H1 (cell line): ENCODE measurements at regions of chr12 and their contacts with region 1.

Region 1: GRCh38 chr12:117836999-117837736 is 131.6 kb downstream of the KSR2 start:
- DNase-seq: peak; percentile 70 to 96
- H3K4me3 ChIP-seq: peak overlapping the region in 1 of 4 experiments; percentile 39; a peak in 1 of 8 replicates
- H3K27ac ChIP-seq: no peak overlapping the region
- H3K4me1 ChIP-seq: peaks cover 0 to 5% (median 2%) of the 10 kb centered on the region in 4 experiments; a peak in 4 of 7 replicates
- H3K27me3 ChIP-seq: no peaks in the 10 kb centered on the region
- CTCF ChIP-seq: peak; percentile 95 to 100 (median 99)
- EP300 ChIP-seq: no peak
- POLR2A ChIP-seq: no peak
- RAD21 ChIP-seq: peak; percentile 97 to 98

Region 2: DNA sequence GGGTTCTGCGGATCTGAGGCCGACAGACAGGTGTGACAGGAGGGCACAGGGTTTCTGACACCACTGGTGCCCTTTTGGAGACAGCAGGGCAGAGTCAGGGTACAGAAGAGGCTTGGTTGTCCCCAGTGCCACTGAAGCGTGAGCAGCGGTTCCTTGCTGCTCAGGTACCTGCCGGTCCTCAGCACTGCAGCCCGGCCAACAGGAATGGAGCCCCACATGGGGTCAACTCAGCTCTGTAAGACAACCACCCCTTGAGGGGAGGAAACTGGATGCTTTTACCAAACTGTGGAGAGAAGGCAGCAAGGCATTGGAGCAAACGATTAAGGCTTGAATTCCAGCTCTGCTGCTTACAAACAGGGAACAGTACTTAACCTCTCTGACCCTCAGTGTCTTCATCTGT is 229.4 kb before region 1 on chr12:
- CTCF ChIA-PET with region 1: interaction called, 16 read pairs
- POLR2A ChIA-PET with region 1: no interaction called
- DNase-seq: no peak
- H3K4me3 ChIP-seq: no peak overlapping the region
- H3K27ac ChIP-seq: no peak overlapping the region
- H3K4me1 ChIP-seq: no peaks in the 10 kb centered on the region; a peak in 4 of 7 replicates
- H3K27me3 ChIP-seq: no peaks in the 10 kb centered on the region
- CTCF ChIP-seq: no peak
- EP300 ChIP-seq: no peak
- POLR2A ChIP-seq: no peak
- RAD21 ChIP-seq: no peak

Region 3: GRCh38 chr12:117671734-117672133 is 165.4 kb before region 1 on chr12:
- CTCF ChIA-PET with region 1: interaction called, 25 read pairs
- POLR2A ChIA-PET with region 1: interaction called, 5 read pairs
- DNase-seq: peak; percentile 75 to 87
- H3K4me3 ChIP-seq: no peak overlapping the region
- H3K27ac ChIP-seq: no peak overlapping the region
- H3K4me1 ChIP-seq: peaks cover 0 to 4% (median 2%) of the 10 kb centered on the region in 4 experiments; a peak in 3 of 7 replicates
- H3K27me3 ChIP-seq: no peaks in the 10 kb centered on the region
- CTCF ChIP-seq: peak; percentile 84 to 93 (median 86)
- EP300 ChIP-seq: no peak
- POLR2A ChIP-seq: no peak
- RAD21 ChIP-seq: peak; percentile 88 to 95

Region 4: DNA sequence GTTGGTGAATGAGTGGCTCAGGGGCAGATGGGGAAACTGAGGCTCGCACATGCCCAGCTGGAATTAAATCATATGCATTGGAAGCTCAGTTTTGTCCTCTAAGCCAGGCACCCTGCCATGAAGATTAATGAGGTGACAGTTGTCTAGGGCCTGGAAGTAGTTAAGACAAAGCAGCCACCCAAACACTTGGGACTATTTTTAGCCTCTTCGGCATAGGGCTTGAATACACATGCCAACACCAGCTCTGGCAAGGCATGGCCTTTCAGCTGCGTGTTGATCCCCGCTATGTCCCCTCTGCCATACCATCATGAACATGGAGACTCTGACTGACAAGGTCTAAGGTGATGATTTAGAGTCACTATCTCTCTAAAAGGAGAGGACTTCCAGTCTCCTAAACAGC is 118.6 kb before region 1 on chr12:
- CTCF ChIA-PET with region 1: interaction called, 12 read pairs
- POLR2A ChIA-PET with region 1: no interaction called
- DNase-seq: no peak
- H3K4me3 ChIP-seq: no peak overlapping the region
- H3K27ac ChIP-seq: no peak overlapping the region
- H3K4me1 ChIP-seq: no peaks in the 10 kb centered on the region; a peak in 1 of 7 replicates
- H3K27me3 ChIP-seq: no peaks in the 10 kb centered on the region
- CTCF ChIP-seq: no peak
- EP300 ChIP-seq: no peak
- POLR2A ChIP-seq: no peak
- RAD21 ChIP-seq: no peak

Region 5: DNA sequence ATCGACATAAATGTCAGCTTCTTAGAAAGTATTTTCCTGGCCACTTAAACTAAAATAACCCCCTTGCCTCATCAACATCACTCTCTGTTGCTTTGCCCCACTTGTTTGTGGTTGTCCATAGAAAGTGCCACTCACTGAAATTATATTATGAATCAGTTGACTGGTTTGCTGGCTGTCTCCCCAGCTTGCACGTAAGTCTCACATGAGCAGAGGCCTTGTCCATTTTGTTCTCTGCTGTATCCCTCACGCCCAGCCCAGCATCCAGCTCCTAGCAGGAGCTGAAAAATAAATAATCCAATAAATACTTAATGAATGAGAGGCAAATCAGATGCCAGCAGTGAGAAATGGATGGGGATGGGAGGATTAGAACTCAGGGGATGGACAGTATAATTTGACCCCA is 27.7 kb before region 1 on chr12:
- CTCF ChIA-PET with region 1: interaction called, 10 read pairs
- POLR2A ChIA-PET with region 1: no interaction called
- DNase-seq: no peak
- H3K4me3 ChIP-seq: no peak overlapping the region
- H3K27ac ChIP-seq: no peak overlapping the region
- H3K4me1 ChIP-seq: no peaks in the 10 kb centered on the region
- H3K27me3 ChIP-seq: no peaks in the 10 kb centered on the region
- CTCF ChIP-seq: no peak
- EP300 ChIP-seq: no peak
- POLR2A ChIP-seq: no peak
- RAD21 ChIP-seq: no peak

Region 6: GRCh38 chr12:117825827-117826226 is 11.3 kb before region 1 on chr12:
- CTCF ChIA-PET with region 1: interaction called, 17 read pairs
- POLR2A ChIA-PET with region 1: no interaction called
- DNase-seq: no peak
- H3K4me3 ChIP-seq: no peak overlapping the region
- H3K27ac ChIP-seq: no peak overlapping the region
- H3K4me1 ChIP-seq: no peaks in the 10 kb centered on the region
- H3K27me3 ChIP-seq: no peaks in the 10 kb centered on the region
- CTCF ChIP-seq: no peak
- EP300 ChIP-seq: no peak
- POLR2A ChIP-seq: no peak
- RAD21 ChIP-seq: no peak

Region 7: GRCh38 chr12:117857632-117858612 is 20.8 kb after region 1 on chr12:
- CTCF ChIA-PET with region 1: interaction called, 31 read pairs
- POLR2A ChIA-PET with region 1: no interaction called
- DNase-seq: peak; percentile 49 to 87
- H3K4me3 ChIP-seq: no peak overlapping the region
- H3K27ac ChIP-seq: no peak overlapping the region
- H3K4me1 ChIP-seq: no peaks in the 10 kb centered on the region
- H3K27me3 ChIP-seq: no peaks in the 10 kb centered on the region
- CTCF ChIP-seq: peak; percentile 51 to 86 (median 52)
- EP300 ChIP-seq: no peak
- POLR2A ChIP-seq: no peak
- RAD21 ChIP-seq: peak in 1 of 2 experiments; percentile 41; a peak in 2 of 4 replicates